IMR-90 (cell line): ENCODE measurements at regions of chr9 and their contacts with region 1.

Region 1: DNA sequence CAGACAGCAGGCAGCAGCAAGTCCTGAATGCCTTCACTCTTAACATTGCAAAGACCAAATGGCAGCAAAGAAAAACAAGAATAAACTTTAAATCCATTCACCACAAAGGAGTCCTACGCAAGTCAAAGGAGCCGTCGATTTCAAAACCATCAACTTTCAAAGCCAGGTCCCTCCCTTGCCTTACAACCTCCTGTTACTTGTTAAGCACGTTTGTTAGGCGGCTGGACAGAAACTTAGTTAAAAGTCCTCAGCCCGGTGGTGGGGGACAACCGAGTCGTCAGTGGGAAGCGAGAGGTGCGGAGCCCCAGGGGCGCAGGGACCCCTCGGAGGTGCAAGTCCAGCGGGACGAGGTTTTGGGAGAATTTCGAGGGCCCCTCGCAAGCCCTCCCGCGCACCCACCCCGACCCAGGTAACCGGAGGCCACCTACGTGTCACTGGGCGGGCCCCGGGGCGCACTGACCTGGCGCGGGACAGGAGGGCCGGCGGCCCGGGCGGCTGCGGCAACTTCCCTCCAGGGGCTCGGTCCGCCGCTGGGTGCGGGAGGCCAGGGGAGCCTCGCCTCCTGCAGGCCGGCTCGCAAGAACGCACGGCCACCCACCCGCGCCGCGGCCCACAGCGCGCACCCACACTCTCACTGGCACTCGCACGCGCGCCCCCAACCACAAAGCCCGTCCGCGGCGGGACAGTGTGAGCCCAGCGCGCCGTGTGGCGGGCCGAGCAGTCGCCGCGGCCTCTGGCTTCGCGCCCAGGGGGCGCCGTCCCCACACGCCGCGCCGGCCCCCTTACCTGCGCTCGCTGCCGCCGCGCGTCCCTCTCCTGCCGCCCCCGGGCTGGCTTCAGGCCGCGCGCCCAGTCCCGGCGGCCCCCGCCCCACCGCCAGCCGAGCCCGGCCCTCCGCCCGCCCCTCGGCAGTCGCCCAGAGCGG is 627 bp downstream of the LPAR1 start:
- DNase-seq: peak; percentile 37
- ATAC-seq: peak; percentile 4
- H3K4me3 ChIP-seq: peak overlapping the region; percentile 90
- H3K27ac ChIP-seq: peak overlapping the region; percentile 97
- H3K4me1 ChIP-seq: peaks cover 8% of the 10 kb centered on the region
- H3K27me3 ChIP-seq: no peaks in the 10 kb centered on the region
- CTCF ChIP-seq: peak; percentile 30; the same call in 1 of the 2 replicates
- POLR2A ChIP-seq: no peak
- RAD21 ChIP-seq: peak; percentile 32

Region 2: GRCh38 chr9:110650991-110651411 is 386.6 kb before region 1 on chr9:
- CTCF ChIA-PET with region 1: no interaction called
- POLR2A ChIA-PET with region 1: interaction called, 4 read pairs
- dilution Hi-C with region 1: no loop called
- in situ Hi-C with region 1: no loop called
- intact Hi-C with region 1: loop called (anchors 5 kb)
- DNase-seq: peak; percentile 99
- ATAC-seq: peak; percentile 75
- H3K4me3 ChIP-seq: no peak overlapping the region
- H3K27ac ChIP-seq: peak overlapping the region; percentile 94; the same call in 1 of the 2 replicates
- H3K4me1 ChIP-seq: peaks cover 17% of the 10 kb centered on the region
- H3K27me3 ChIP-seq: no peaks in the 10 kb centered on the region
- CTCF ChIP-seq: no peak
- POLR2A ChIP-seq: no peak
- RAD21 ChIP-seq: no peak

Region 3: DNA sequence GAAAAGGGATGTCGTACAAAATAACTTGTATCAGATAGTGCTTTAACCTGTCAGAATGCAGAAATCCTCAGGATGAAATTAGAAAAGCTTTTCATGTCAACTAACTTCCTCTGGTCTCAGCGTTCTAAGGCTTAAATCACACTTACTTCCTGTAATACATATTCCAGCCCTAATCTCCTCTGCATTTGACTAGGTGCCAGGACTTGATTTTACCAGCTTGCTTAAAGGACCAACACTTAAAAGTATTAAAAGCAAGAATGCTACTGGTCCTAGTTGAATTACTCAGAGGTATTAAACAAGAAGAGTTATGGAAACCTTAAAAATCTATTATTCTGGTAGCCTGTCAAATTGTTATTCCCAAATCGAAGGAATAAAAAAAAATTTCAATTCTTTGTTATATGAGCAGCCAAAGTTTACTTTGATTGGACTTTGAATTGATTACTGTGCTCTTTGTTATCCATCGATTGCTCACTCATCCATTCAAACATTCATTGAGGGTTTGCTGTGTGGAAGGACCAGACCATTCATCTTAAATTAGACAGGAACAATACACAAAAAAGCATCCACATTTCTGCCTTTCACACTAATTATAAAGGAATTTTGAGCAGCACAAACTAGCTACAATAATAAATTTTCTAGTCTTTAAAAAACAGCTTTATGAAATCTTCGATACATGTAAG is 260.3 kb before region 1 on chr9:
- CTCF ChIA-PET with region 1: no interaction called
- POLR2A ChIA-PET with region 1: interaction called, 4 read pairs
- dilution Hi-C with region 1: no loop called
- in situ Hi-C with region 1: no loop called
- intact Hi-C with region 1: loop called (anchors 10 kb)
- DNase-seq: peak; percentile 36
- ATAC-seq: peak; percentile 29; the same call in 1 of the 2 replicates
- H3K4me3 ChIP-seq: no peak overlapping the region
- H3K27ac ChIP-seq: no peak overlapping the region; the same call in 1 of the 2 replicates
- H3K4me1 ChIP-seq: no peaks in the 10 kb centered on the region
- H3K27me3 ChIP-seq: no peaks in the 10 kb centered on the region
- CTCF ChIP-seq: no peak
- POLR2A ChIP-seq: no peak
- RAD21 ChIP-seq: no peak

Region 4: GRCh38 chr9:110880189-110880588 is 157.5 kb before region 1 on chr9:
- CTCF ChIA-PET with region 1: no interaction called
- POLR2A ChIA-PET with region 1: interaction called, 4 read pairs
- dilution Hi-C with region 1: no loop called
- in situ Hi-C with region 1: no loop called
- intact Hi-C with region 1: loop called (anchors 10 kb)
- DNase-seq: peak; percentile 91
- ATAC-seq: peak; percentile 50
- H3K4me3 ChIP-seq: no peak overlapping the region
- H3K27ac ChIP-seq: peak overlapping the region; percentile 86; the same call in 1 of the 2 replicates
- H3K4me1 ChIP-seq: peaks cover 20% of the 10 kb centered on the region
- H3K27me3 ChIP-seq: no peaks in the 10 kb centered on the region
- CTCF ChIP-seq: no peak
- POLR2A ChIP-seq: no peak
- RAD21 ChIP-seq: no peak

Region 5: DNA sequence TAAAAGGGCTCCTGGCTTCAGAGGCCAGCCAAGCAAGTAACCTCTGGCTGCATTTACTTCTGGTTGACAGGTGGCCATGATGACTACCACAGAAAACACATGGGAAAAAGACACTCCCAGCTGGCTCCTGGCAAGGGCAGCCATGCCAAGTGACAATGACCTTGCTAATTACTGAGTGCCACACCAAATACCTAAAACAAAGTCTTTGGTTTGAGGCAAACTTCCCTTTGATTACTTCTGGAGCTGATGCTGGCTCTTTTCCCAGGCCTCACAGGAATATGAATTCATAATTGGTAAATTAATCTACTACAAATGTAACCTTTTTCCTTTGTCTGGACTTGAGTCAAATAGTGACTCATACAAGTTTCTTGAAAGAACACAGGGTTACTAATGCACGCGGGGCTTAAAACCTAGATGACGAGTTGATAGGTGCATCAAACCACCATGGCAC is 60.4 kb before region 1 on chr9:
- CTCF ChIA-PET with region 1: no interaction called
- POLR2A ChIA-PET with region 1: no interaction called
- dilution Hi-C with region 1: no loop called
- in situ Hi-C with region 1: no loop called
- intact Hi-C with region 1: loop called (anchors 2 kb)
- DNase-seq: peak; percentile 91
- ATAC-seq: peak; percentile 27
- H3K4me3 ChIP-seq: no peak overlapping the region
- H3K27ac ChIP-seq: peak overlapping the region; percentile 5; the same call in 1 of the 2 replicates
- H3K4me1 ChIP-seq: peaks cover 17% of the 10 kb centered on the region
- H3K27me3 ChIP-seq: no peaks in the 10 kb centered on the region
- CTCF ChIP-seq: no peak
- POLR2A ChIP-seq: no peak
- RAD21 ChIP-seq: no peak

Region 6: GRCh38 chr9:110996436-110997220 is 41.0 kb before region 1 on chr9:
- CTCF ChIA-PET with region 1: no interaction called
- POLR2A ChIA-PET with region 1: no interaction called
- dilution Hi-C with region 1: no loop called
- in situ Hi-C with region 1: no loop called
- intact Hi-C with region 1: no loop called
- DNase-seq: peak; percentile 82
- ATAC-seq: peak; percentile 5
- H3K4me3 ChIP-seq: no peak overlapping the region
- H3K27ac ChIP-seq: peak overlapping the region; percentile 38; the same call in 1 of the 2 replicates
- H3K4me1 ChIP-seq: peaks cover 24% of the 10 kb centered on the region
- H3K27me3 ChIP-seq: no peaks in the 10 kb centered on the region
- CTCF ChIP-seq: no peak
- POLR2A ChIP-seq: no peak
- RAD21 ChIP-seq: no peak

Region 7: DNA sequence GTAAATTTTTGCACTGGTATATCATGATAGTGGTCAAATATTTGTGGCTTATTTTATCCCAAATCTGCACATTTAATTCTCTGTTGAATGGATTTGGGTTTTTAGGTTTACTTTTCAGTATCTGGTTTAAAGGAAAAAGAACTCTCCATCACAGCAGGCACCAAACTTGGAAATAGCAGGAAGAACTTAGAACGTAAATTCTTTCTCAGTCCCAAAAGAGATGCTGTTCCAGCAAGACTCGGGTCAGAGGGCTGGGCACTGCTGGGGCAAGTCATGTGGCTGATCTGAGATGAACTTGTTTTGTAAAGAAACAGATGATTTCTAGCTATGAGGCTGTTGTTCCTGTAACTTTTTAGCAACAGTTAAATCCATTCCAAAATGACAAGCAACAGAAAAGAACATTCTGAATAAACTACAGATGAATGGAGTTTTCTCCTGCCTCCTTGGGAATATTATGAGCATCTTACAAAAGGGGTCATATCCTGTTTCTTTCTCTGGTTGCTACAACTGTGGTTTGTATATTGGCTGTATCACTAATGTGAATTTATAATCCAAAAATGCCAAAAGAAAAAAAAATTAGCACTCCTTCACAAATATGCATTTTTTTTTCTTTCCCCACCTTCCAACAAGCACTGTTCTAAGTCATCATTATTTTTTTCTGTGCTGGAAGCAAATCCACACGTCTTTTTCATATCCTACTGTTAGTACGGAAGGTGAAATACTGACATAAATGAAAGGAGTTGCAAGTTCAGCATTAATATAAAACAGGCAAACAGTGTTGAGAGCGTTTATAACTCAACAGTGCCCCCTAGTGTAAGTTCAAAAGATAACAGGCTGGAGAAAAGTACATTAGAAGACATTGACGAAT is 261.3 kb after region 1 on chr9:
- CTCF ChIA-PET with region 1: interaction called, 3 read pairs
- POLR2A ChIA-PET with region 1: interaction called, 4 read pairs
- dilution Hi-C with region 1: no loop called
- in situ Hi-C with region 1: loop called (anchors 5 kb)
- intact Hi-C with region 1: loop called (anchors 1 kb)
- DNase-seq: peak; percentile 81
- ATAC-seq: peak; percentile 93
- H3K4me3 ChIP-seq: no peak overlapping the region
- H3K27ac ChIP-seq: peak overlapping the region; percentile 98
- H3K4me1 ChIP-seq: peaks cover 5% of the 10 kb centered on the region; the same call in 1 of the 2 replicates
- H3K27me3 ChIP-seq: no peaks in the 10 kb centered on the region
- CTCF ChIP-seq: peak; percentile 90
- POLR2A ChIP-seq: peak; percentile 36; the same call in 1 of the 2 replicates
- RAD21 ChIP-seq: peak; percentile 95